Esophagus squamous epithelium (tissue), 5 donors: ENCODE measurements at regions of chr12 and their contacts with region 1.

Region 1: GRCh38 chr12:54201001-54201794 is 12.4 kb upstream of the SMUG1 start:
- DNase-seq: no peak
- H3K4me3 ChIP-seq: no peak overlapping the region
- H3K27ac ChIP-seq: no peak overlapping the region
- H3K4me1 ChIP-seq: peaks cover 0 to 14% (median 10%) of the 10 kb centered on the region in 3 donors
- H3K27me3 ChIP-seq: peaks cover 0 to 92% (median 0%) of the 10 kb centered on the region in 4 donors
- CTCF ChIP-seq: peak; percentile 91 to 99 (median 98)
- POLR2A ChIP-seq: no peak

Region 2: DNA sequence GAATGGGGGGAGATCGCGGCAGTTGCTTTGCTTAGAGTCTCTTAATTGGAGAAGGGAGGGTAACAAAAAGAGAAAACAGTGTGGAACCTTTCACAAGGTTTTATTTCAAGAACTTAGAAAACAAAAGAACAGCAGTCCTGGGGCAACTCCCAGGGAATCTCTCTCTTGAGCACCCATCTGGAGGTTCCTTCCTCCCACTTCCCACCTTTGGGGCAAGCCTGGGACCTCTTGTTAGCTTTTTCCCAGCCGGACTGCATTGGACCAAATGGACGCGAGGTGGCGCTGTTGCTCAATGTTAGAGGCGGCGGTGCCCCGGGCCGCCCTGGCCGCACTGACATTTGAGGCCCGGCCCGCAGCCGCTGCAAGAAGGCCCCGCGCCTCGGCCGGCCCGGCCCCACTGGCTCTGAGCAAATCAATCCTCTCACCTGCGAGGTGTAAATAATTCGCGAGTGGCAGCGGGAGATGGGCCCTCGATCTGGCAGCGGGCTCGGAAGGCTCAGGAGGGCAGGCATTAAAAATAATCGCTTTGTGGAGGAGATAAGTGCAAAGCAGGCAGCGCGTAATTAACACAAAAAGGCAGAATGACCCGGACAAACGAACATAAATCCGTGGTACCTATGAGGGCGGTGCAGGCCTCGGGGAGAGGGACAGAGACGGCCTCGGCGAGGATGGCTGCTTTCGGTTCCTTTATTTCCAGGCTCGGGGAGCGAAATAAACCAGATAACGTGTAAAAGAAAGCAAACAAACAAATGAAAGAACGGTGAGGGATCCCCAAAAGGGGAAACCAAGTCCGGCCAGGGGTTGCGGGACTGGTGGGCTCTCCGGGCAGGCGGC is 195.1 kb before region 1 on chr12:
- intact Hi-C with region 1: loop called (anchors 5 kb)
- DNase-seq: peak; percentile 22
- H3K4me3 ChIP-seq: peak overlapping the region in 3 of 4 donors; percentile 20 to 53 (median 30)
- H3K27ac ChIP-seq: no peak overlapping the region
- H3K4me1 ChIP-seq: peaks cover 8 to 31% (median 17%) of the 10 kb centered on the region in 3 donors
- H3K27me3 ChIP-seq: peaks cover 5 to 100% (median 60%) of the 10 kb centered on the region in 4 donors
- CTCF ChIP-seq: peak; percentile 78 to 97 (median 94)
- POLR2A ChIP-seq: no peak